ENCODE measurements at regions of chr10 and their contacts with region 1.

Region 1: DNA sequence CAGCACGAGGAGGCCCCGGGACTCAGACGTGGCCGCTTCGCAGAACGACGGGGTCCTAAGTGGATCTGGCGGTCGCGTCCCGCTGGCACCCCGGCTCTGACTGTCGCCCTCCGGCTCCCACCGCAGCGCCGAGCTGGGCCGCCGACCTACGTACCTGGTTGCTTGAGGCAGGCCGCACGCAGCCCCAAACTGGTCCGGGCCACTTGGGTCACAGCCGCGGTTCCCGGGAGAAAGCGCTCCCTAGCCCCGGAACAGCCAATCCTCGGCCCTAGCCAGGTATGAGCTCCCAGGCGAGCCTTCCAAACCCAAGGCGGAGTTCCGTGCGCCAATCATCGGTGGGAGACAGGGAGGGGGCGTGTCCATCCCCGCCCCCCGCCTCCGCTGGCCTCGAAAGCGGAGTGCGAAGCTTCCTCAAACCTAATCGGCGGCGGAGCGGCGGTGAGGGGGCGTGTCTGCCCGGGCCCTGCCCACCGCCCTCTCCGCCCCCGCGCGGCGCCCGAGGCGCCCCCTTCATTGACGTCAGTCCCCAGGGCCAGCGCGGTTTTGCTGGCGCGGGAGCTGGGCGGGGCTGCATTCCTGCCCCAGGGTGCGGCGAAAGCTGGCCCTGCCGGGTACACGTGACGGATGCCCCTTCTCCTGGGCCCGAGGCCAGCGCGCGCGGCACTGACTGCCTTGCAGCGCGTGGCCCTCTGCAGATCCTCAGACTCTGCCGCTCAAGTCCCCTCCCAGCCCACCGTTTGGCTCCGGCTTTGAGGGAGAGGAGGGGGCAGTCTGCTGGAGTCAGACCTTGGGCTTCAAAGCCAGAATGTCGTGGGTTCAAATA is at the start of gene AVPI1:
- DNase-seq: peak; percentile 97
- ATAC-seq: peak; percentile 93
- H3K4me3 Mint-ChIP-seq: peak within 1 kb of the TSS; percentile 81
- H3K27ac Mint-ChIP-seq: peak within 1 kb of the TSS; percentile 69
- H3K4me1 Mint-ChIP-seq: peaks cover 22% of the 10 kb centered on the region
- H3K27me3 Mint-ChIP-seq: no peaks in the 10 kb centered on the region
- CTCF ChIP-seq: no peak
- total RNA-seq, gene AVPI1: 2.5 to 3.0 TPM

Region 2: GRCh38 chr10:97676770-97677581 is 10.2 kb before region 1 on chr10:
- CTCF ChIA-PET with region 1: interaction called, 71 read pairs
- POLR2A ChIA-PET with region 1: interaction called, 5 read pairs
- intact Hi-C with region 1: no loop called
- DNase-seq: peak; percentile 58
- ATAC-seq: peak; percentile 87
- H3K4me3 Mint-ChIP-seq: no peak overlapping the region
- H3K27ac Mint-ChIP-seq: no peak overlapping the region
- H3K4me1 Mint-ChIP-seq: peaks cover 9% of the 10 kb centered on the region
- H3K27me3 Mint-ChIP-seq: no peaks in the 10 kb centered on the region
- CTCF ChIP-seq: peak; percentile 90

Region 3: DNA sequence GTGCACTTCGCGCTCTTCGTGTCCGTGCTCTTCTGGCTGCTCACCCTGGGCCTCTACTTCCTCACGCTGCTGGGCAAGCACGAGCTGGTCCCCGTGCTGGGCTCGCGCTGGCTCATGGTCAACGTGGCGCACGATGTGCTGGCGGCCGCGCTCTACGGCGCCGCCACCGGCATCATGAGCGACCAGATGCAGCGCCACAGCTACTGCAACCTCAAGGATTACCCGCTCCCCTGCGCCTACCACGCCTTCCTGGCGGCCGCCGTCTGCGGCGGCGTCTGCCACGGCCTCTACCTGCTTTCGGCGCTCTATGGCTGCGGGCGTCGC is 26.8 kb after region 1 on chr10:
- CTCF ChIA-PET with region 1: interaction called, 19 read pairs
- POLR2A ChIA-PET with region 1: interaction called, 10 read pairs
- intact Hi-C with region 1: no loop called
- DNase-seq: peak; percentile 62
- ATAC-seq: peak; percentile 76
- H3K4me3 Mint-ChIP-seq: peak overlapping the region; percentile 98
- H3K27ac Mint-ChIP-seq: peak overlapping the region; percentile 92
- H3K4me1 Mint-ChIP-seq: peaks cover 6% of the 10 kb centered on the region
- H3K27me3 Mint-ChIP-seq: peaks cover 18% of the 10 kb centered on the region
- CTCF ChIP-seq: no peak

Region 4: DNA sequence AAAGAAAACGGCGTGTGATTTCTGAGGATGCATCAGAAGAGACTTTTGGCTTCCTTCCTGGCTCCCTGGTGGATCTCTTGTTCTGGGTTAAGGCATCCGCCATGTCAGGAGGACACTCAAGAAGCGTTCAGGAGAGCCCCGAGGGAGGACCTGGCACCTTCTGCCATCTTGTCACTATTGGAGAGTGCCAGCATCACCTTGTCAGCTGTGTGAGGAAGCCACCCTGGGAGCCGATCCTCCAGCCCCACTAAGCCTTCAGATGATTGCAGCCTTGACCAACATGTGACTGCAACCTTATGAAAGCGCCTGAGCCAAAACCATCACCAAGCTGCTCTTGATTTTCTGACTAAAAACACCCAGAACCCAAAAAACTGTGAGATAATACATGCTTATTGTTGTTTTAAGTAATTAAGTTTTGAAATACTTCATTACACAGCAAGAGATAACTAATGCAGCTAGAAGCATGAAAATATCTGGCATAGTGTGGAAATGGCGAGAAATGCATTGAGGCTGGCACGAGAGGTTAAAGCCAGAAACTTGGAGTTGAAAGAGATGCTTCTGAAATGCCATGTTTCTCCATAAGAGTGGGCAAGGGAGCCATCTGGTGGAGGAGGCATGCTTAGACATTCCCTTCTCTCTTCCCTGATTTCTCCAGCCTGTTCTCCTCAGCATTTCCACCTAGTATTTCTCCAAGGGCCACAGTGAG is 44.3 kb after region 1 on chr10:
- CTCF ChIA-PET with region 1: interaction called, 34 read pairs
- POLR2A ChIA-PET with region 1: interaction called, 5 read pairs
- intact Hi-C with region 1: no loop called
- DNase-seq: peak; percentile 69
- ATAC-seq: peak; percentile 58
- H3K4me3 Mint-ChIP-seq: no peak overlapping the region
- H3K27ac Mint-ChIP-seq: no peak overlapping the region
- H3K4me1 Mint-ChIP-seq: peaks cover 6% of the 10 kb centered on the region
- H3K27me3 Mint-ChIP-seq: peaks cover 3% of the 10 kb centered on the region
- CTCF ChIP-seq: peak; percentile 86

Measured in activated CD8-positive, alpha-beta T cell treated with anti-CD3 and anti-CD28 coated beads for 36 hours (primary cell).